ENCODE measurements at regions of chr18 and their contacts with region 1.

Region 1: GRCh38 chr18:12990967-12991838 is at the start of gene CEP192:
- DNase-seq: peak; percentile 99
- H3K4me3 Mint-ChIP-seq: peak within 1 kb of the TSS; percentile 99
- H3K27ac Mint-ChIP-seq: peak within 1 kb of the TSS; percentile 97
- H3K4me1 Mint-ChIP-seq: peaks cover 10% of the 10 kb centered on the region
- H3K27me3 Mint-ChIP-seq: no peaks in the 10 kb centered on the region
- total RNA-seq, gene CEP192: 32.7 to 33.6 TPM

Region 2: DNA sequence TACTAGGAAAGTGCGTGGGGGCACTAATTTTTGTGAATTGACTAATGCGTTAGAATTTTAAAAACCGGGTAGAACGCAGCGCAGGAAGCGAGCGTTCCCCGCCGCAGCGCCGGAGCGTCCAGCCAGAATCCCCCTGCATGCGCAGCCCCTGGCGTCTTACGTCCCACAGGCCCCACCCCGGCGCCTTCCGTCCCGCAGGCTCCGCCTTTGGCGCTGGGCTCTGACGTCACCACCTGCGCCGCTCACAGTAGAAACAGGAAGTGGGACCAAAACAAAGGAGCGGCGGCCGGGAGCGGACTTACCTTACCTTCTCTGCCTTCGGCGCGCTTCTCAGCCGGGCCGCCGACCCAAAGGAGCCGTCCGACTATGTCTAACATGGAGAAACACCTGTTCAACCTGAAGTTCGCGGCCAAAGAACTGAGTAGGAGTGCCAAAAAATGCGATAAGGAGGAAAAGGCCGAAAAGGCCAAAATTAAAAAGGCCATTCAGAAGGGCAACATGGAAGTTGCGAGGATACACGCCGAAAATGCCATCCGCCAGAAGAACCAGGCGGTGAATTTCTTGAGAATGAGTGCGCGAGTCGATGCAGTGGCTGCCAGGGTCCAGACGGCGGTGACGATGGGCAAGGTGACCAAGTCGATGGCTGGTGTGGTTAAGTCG is 1139.9 kb before region 1 on chr18 and contains the start of gene CHMP1B:
- CTCF ChIA-PET with region 1: no interaction called
- intact Hi-C with region 1: loop called (anchors 2 kb)
- DNase-seq: peak; percentile 98
- H3K4me3 Mint-ChIP-seq: peak within 1 kb of the TSS; percentile 100
- H3K27ac Mint-ChIP-seq: peak within 1 kb of the TSS; percentile 100
- H3K4me1 Mint-ChIP-seq: peaks cover 31% of the 10 kb centered on the region
- H3K27me3 Mint-ChIP-seq: no peaks in the 10 kb centered on the region
- total RNA-seq, gene CHMP1B: 23.2 TPM

Region 3: DNA sequence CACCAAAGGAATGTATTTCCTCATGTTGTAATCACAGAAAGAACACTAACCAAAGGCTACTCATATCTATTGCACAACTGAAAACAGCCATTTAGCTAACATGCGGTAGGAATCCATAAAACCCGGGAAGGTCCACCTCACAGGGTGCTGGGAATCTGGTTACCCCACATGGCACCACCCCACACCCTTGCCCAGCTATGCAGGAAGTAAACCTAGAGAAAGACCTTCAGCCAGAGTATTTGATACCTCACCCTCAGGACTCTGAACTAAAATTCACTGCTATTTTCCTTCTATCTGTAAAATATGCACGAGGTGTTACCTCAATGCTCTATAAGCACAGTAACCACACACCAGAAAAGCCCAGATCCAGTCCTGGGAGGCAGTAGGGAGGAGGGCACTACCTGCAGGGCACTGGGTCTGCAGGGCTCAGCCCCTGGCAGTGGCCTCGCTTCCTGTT is 153.0 kb before region 1 on chr18:
- CTCF ChIA-PET with region 1: no interaction called
- intact Hi-C with region 1: loop called (anchors 1 kb)
- DNase-seq: no peak
- H3K4me3 Mint-ChIP-seq: peak overlapping the region; percentile 46
- H3K27ac Mint-ChIP-seq: peak overlapping the region; percentile 84
- H3K4me1 Mint-ChIP-seq: peaks cover 52% of the 10 kb centered on the region
- H3K27me3 Mint-ChIP-seq: no peaks in the 10 kb centered on the region

Region 4: DNA sequence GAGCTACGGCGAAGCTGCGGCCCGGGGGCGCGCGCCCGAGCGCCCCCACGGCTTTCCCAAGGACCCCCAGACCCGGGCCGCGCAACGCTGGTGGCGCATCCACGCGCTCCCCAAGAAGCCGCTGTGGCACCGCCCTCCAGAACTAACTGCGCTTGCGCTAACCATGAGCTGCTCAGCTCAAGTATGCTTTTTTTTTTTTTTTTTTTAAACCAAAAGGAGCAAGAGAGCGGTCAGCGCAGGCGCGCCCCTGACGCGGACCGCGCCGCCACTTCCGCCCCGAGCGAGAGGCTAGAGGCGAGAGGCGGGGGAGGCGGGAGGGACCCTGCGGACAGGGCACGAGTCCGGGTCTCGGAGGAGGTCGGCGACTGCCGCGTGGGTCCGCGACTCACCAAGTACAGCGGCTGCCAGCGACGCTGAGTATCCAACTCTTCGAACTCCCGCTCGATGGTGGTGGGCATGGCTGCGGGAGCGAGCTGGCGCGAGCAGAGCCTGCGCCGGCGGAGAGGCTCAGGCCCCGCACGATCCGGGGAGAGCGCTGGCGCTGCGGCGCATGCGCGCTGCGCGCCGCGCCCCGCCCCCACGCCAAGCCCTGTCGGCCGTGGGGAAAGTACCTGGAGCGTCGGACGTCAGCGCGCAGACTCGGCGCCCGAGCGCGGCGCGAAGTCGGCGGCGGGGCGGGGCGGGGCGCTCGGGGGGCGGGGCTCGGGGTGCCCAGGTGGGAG is 107.4 kb before region 1 on chr18 and contains the start of gene PTPN2:
- CTCF ChIA-PET with region 1: no interaction called
- intact Hi-C with region 1: loop called (anchors 1 kb)
- DNase-seq: peak; percentile 92
- H3K4me3 Mint-ChIP-seq: peak within 1 kb of the TSS; percentile 89
- H3K27ac Mint-ChIP-seq: peak within 1 kb of the TSS; percentile 90
- H3K4me1 Mint-ChIP-seq: peaks cover 53% of the 10 kb centered on the region
- H3K27me3 Mint-ChIP-seq: no peaks in the 10 kb centered on the region
- total RNA-seq, gene PTPN2: 68.5 to 71.8 TPM

Region 5: DNA sequence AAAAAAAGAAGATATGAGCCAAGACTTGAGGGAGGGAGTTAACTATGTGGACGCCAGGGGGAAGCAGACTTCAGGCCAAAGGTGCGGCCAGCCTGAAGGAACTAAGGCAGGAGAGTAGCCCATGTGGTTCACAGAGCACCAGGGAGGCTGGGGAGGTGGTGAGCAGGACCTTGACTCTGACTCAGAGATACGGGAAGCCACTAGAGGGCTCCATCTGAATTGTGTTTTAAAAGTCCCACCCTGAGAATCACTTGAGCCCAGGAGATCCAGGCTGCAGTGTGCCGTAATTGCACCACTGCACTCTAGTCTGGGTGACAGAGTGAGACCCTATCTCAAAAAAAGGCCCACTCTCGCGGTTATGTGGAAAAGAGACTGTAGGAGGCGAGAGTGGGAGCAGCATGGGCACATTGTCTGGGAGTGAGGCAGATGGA is 12.3 kb after region 1 on chr18:
- CTCF ChIA-PET with region 1: interaction called, 3 read pairs
- intact Hi-C with region 1: loop called (anchors 1 kb)
- DNase-seq: peak; percentile 37
- H3K4me3 Mint-ChIP-seq: no peak overlapping the region
- H3K27ac Mint-ChIP-seq: no peak overlapping the region
- H3K4me1 Mint-ChIP-seq: peaks cover 16% of the 10 kb centered on the region
- H3K27me3 Mint-ChIP-seq: no peaks in the 10 kb centered on the region

Region 6: DNA sequence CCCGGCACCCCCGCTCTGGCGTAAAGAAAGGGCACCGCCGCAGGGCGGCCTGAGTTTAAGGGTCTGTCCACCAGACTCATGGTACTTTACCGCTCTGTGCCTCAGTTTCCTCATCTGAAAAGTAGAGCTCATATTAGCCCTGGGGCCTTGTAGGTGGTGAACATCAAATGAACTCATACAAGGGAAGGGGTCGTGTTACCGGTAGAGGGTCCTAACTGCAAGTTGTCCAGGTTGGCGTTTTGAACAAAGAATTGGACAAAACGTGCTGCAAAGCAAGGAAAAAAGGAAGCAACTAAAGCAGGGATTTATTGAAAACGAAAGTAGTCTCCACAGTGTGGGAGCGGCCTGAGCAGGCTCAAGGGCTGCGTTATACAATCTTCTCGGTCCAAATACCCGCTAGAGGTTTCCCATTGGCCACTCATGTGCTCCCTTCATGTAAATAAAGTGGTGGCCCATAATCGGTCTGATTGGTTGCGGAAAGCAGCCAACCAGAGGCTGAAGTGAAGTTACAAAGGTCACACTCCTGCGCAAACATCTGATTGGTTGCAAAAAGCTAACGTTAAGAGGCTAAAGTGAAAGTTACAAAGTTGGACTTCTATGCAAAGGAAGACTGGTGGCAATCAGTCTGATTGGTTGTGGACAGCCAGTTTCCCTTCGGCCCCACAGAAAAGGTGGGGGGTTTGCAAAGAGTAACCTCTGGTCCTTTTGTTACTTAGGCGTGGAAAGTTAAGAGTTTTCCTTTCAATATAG is 146.6 kb after region 1 on chr18:
- CTCF ChIA-PET with region 1: interaction called, 4 read pairs
- intact Hi-C with region 1: loop called (anchors 1 kb)
- DNase-seq: peak; percentile 74
- H3K4me3 Mint-ChIP-seq: peak overlapping the region; percentile 96
- H3K27ac Mint-ChIP-seq: peak overlapping the region; percentile 75
- H3K4me1 Mint-ChIP-seq: peaks cover 24% of the 10 kb centered on the region
- H3K27me3 Mint-ChIP-seq: no peaks in the 10 kb centered on the region

Region 7: GRCh38 chr18:13464432-13465123 is 473.4 kb after region 1 on chr18:
- CTCF ChIA-PET with region 1: no interaction called
- intact Hi-C with region 1: loop called (anchors 5 kb)
- DNase-seq: peak; percentile 86
- H3K4me3 Mint-ChIP-seq: peak overlapping the region; percentile 82
- H3K27ac Mint-ChIP-seq: peak overlapping the region; percentile 95
- H3K4me1 Mint-ChIP-seq: peaks cover 56% of the 10 kb centered on the region
- H3K27me3 Mint-ChIP-seq: no peaks in the 10 kb centered on the region

Measured in activated naive CD4-positive, alpha-beta T cell treated with anti-CD3 and anti-CD28 coated beads for 36 hours (primary cell).